Activated CD4-positive, alpha-beta T cell treated with anti-CD3 and anti-CD28 coated beads, Interleukin-2, amount 10 ng/mL, durations not matched to agents 7 days and 5 days (primary cell): ENCODE measurements at regions of chr2 and their contacts with region 1.

Region 1: GRCh38 chr2:12514631-12515433 is 201.9 kb upstream of the TRIB2 start:
- DNase-seq: peak; percentile 50
- H3K4me3 Mint-ChIP-seq: no peak overlapping the region
- H3K27ac Mint-ChIP-seq: peak overlapping the region; percentile 82
- H3K4me1 Mint-ChIP-seq: peaks cover 47% of the 10 kb centered on the region
- H3K27me3 Mint-ChIP-seq: peaks cover 10% of the 10 kb centered on the region

Region 2: DNA sequence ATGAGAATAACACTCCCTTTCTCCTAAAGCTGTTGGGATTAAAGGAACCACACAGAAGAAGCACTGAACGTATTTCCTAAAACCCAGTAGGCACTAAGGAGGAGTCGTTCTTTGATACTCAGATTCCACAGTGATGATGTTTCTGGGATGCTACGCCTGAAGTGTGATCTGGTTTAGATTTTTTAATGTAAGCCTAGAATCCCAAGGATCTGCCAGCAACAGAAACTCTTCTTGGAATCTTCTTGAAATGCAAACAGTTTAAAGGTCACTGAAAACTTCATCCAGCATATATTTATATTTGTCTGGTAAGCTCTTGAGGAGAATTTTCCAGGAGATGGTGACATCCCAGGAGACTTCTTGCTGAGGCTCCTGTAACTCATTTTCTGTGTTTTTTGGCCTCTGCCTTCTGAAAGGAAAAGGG is 45.7 kb before region 1 on chr2:
- CTCF ChIA-PET with region 1: no interaction called
- POLR2A ChIA-PET with region 1: interaction called, 14 read pairs
- DNase-seq: no peak
- H3K4me3 Mint-ChIP-seq: no peak overlapping the region
- H3K27ac Mint-ChIP-seq: no peak overlapping the region
- H3K4me1 Mint-ChIP-seq: peaks cover 8% of the 10 kb centered on the region
- H3K27me3 Mint-ChIP-seq: no peaks in the 10 kb centered on the region

Region 3: DNA sequence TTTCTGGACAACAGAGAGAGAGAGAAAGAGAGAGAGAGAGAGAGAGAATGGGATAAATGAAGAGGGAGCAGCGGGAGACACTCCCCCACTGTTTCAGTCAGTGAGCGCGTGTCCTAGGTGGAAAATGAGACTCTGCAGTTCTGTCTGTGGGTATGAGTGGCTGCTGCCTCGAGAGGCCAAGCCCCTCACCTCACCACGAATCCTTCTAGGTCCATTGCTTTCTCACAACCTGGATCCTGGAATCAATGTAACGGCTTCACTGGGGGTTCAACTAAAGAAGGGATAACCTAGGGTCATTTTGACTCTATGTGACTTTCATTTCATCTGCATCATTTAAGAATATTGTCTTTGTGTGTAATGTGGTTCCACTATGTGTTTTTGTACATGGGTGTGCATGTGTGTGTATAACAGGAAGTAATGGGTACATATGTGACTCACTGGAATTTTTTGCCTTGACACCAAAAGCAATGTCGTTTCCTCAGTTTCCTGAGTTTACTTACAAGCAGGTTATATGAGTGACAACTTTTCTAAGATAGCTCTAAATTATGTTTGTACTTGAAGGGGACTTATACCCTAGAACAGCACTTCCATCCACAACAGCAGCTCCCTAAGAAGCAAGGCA is 19.5 kb before region 1 on chr2:
- CTCF ChIA-PET with region 1: no interaction called
- POLR2A ChIA-PET with region 1: no interaction called
- DNase-seq: no peak
- H3K4me3 Mint-ChIP-seq: no peak overlapping the region
- H3K27ac Mint-ChIP-seq: peak overlapping the region; percentile 62
- H3K4me1 Mint-ChIP-seq: peaks cover 73% of the 10 kb centered on the region
- H3K27me3 Mint-ChIP-seq: no peaks in the 10 kb centered on the region

Region 4: DNA sequence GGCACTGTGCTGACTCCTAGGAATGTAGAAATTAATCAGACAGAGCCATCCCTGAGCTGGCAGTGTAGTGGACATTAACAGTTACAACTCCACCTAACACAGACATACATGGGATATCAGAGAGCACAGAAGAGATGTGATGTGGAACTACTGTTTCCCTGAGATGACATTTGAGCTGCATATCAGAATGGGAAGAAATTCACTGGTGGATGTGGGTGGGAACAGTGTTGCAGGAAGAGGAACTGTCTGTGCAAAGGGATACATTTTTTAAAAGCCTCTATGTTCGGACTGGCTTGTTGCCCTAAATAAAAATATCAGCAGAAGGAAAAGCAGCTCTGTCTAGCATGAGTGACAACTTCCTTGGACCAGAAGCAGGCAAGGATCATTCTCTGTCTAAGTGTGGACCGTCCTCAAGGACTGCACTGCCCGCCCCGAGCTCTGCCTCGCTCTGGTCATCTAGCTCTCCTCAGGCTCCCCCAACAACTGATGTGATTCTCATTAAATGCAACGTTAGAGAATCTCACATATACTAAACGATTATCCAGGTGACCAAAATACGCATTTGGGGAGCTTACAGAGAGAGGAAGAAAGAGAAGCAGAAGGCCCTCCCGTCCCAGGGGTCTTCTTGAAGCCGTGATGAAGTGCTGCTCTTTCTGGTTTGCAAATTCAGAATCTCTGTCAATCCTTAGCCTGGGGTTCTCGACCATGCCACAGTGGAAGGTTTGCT is 28.6 kb after region 1 on chr2:
- CTCF ChIA-PET with region 1: no interaction called
- POLR2A ChIA-PET with region 1: no interaction called
- DNase-seq: no peak
- H3K4me3 Mint-ChIP-seq: no peak overlapping the region
- H3K27ac Mint-ChIP-seq: no peak overlapping the region
- H3K4me1 Mint-ChIP-seq: no peaks in the 10 kb centered on the region
- H3K27me3 Mint-ChIP-seq: no peaks in the 10 kb centered on the region